ENCODE measurements at regions of chr5 and their contacts with region 1.

Region 1: GRCh38 chr5:148374692-148375360 is 8.9 kb upstream of the FBXO38 start:
- DNase-seq: peak; percentile 24 to 67
- ATAC-seq: peak; percentile 95 to 99
- H3K4me3 ChIP-seq: no peak overlapping the region
- H3K27ac ChIP-seq: no peak overlapping the region
- H3K4me1 ChIP-seq: no peaks in the 10 kb centered on the region
- CTCF ChIP-seq: peak; percentile 58
- EP300 ChIP-seq: no peak
- POLR2A ChIP-seq: no peak
- RAD21 ChIP-seq: peak; percentile 53 to 69; a peak in 4 of 5 replicates

Region 2: GRCh38 chr5:148179234-148179824 is 195.5 kb before region 1 on chr5:
- CTCF ChIA-PET with region 1: interaction called, 15 read pairs
- POLR2A ChIA-PET with region 1: no interaction called
- DNase-seq: peak in 1 of 2 experiments; percentile 71
- ATAC-seq: peak; percentile 70 to 77; a peak in 4 of 6 replicates
- H3K4me3 ChIP-seq: no peak overlapping the region
- H3K27ac ChIP-seq: no peak overlapping the region
- H3K4me1 ChIP-seq: no peaks in the 10 kb centered on the region
- CTCF ChIP-seq: peak; percentile 77
- EP300 ChIP-seq: no peak
- POLR2A ChIP-seq: no peak
- RAD21 ChIP-seq: peak; percentile 79 to 84

Region 3: DNA sequence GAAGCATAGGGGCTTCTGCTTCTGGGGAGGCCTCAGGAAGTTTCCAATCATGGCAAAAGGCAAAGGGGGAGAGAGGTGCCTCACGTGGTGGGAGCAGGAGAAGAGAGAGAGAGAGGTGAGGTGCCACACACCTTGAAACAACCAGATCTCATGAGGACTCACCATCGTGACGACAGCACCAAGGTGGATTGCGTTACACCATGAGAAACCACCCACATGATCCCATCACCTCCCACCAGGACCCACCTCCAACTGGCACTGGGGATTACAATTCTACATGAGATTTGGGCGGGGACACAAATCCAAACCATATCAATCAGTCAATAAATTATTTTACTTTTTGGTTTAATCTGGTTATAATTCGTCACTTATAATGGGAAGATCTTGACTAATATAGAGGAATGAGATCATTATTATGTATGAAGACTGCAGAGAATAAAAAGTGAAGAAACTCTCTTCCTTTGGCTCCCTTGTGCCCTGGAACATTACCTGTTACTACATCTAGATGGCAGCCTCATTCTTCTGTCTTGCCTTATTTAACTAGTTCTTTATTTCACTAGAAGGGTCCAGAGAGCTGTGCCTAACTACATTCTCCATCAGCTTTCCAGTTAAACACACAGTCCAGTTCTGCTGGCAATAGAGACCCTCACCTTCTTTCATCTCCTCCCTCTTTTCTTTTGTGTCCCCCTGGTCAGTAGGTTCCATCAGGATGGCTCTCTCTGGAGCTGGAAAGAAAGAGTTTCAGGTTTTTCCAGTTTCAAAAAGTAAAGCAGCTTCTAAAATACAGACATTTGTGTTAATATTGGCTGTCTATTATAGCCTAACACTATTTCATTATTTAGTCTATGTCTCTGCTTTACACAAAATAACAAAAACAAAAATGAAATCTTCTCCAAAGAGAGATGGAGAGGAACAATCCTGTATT is 84.3 kb before region 1 on chr5:
- CTCF ChIA-PET with region 1: interaction called, 15 read pairs
- POLR2A ChIA-PET with region 1: no interaction called
- DNase-seq: peak in 1 of 2 experiments; percentile 11
- ATAC-seq: peak; percentile 54 to 68; a peak in 3 of 6 replicates
- H3K4me3 ChIP-seq: no peak overlapping the region
- H3K27ac ChIP-seq: no peak overlapping the region
- H3K4me1 ChIP-seq: no peaks in the 10 kb centered on the region
- CTCF ChIP-seq: peak; percentile 25; the same call in 2 of the 3 replicates
- EP300 ChIP-seq: no peak
- POLR2A ChIP-seq: no peak
- RAD21 ChIP-seq: peak in 1 of 2 experiments; percentile 42; a peak in 1 of 5 replicates

Measured in A549 (cell line).